ENCODE measurements at regions of chr16 and their contacts with region 1.

Region 1: GRCh38 chr16:84913315-84913714 is 93.5 kb downstream of the CRISPLD2 start:
- DNase-seq: no peak
- H3K4me3 ChIP-seq: no peak overlapping the region
- CTCF ChIP-seq: no peak

Region 2: GRCh38 chr16:84851192-84852127 is 61.9 kb before region 1 on chr16:
- CTCF ChIA-PET with region 1: no interaction called
- POLR2A ChIA-PET with region 1: no interaction called
- DNase-seq: peak; percentile 79
- H3K4me3 ChIP-seq: no peak overlapping the region
- CTCF ChIP-seq: no peak

Region 3: DNA sequence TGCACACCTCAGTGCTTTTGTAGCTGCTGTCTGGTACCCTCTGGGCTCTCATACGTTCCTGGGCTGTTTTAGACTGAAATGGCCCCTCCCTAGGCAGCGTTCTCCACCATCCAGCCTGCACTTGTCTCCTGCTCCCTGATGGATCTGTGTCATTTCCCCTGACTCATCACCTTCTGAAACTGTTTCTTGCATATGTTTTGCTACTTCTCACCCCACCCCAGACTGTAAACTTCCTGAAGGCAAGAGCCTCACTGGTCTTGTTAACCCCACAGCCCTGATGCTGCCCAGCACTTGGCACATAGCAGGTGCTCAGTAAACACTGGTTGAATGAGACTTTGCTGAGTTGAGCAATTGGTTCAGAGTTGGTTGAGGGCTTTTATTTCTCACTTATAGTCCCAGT is 14.9 kb before region 1 on chr16:
- CTCF ChIA-PET with region 1: no interaction called
- POLR2A ChIA-PET with region 1: no interaction called
- DNase-seq: no peak
- H3K4me3 ChIP-seq: no peak overlapping the region
- CTCF ChIP-seq: no peak

Region 4: DNA sequence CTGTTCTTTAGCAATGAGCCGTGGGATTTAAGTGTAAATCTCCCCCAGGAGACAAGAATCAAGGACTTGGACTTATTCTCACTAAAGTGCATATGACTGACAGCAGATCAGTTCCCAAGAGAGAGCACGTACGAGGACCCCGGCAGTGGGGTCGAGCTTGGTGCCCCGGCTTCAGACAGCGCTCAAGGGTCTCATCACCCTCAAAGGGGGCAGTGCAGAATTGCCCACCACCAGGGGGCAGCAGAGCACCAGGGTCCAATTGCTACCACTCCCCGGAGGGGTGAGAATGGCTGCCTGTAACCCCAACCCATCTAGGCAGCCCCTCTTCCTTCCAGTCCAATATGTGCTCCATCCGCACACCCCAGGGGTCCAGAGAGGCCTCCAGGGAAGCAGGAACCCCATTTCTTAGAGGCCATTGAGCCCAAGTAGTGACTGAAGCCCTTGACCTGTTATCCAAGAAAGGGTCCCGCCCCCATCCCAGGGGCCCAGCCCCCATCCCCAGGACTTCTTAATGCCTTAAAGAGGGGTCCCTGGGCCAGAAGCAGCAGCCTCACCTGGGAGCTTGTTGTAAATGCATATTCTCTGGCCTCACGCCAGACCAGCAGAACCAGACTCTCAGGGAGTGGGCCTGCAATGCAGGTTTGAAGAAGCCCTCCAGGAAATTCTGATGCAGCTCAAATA is 11.9 kb after region 1 on chr16:
- CTCF ChIA-PET with region 1: interaction called, 16 read pairs
- POLR2A ChIA-PET with region 1: no interaction called
- DNase-seq: no peak
- H3K4me3 ChIP-seq: no peak overlapping the region
- CTCF ChIP-seq: peak; percentile 72

Region 5: DNA sequence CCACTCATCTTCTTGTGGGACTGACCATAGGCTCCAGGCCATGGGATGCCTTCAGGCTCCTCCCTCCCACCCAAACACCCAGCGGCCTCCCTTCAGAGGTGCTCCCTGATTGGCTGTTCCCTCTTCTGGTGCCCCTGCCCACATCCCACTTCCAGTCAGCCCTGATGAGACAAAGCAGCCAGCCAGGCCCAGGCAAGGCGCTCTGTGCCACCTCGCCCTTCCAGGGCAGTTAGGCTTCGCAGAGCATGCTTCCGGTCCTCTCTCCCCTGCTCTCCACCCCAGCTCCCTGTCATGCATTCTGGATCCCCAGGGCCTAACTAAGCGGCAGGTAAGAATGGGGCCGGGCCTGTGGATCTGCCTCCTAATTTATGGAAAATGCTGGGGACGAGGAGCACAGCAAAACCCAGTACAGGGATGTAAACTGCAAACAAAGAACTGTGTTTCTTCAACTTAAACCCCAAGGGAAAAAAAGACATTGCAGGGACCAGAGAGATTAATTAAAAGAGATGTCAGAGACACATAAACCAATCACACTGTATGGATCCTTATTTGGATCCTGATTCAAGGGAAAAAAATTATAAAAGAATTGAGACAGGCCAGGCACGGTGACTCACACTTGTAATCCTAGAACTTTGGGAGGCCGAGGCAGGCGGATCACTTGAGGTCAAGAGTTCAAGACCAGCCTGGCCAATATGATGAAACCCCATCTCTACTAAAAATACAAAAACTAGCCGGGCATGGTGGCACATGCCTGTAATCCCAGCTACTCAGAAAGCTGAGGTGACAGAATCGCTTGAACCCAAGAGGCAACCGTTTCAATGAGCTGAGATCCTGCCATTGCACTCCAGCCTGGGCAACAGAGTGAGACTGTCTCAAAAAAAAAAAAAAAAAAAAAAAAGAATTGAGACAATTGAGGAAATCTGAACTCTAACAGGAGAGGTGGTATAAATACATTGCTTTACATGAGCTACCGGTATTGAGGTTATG is 72.1 kb after region 1 on chr16:
- CTCF ChIA-PET with region 1: no interaction called
- POLR2A ChIA-PET with region 1: no interaction called
- DNase-seq: peak; percentile 67
- H3K4me3 ChIP-seq: no peak overlapping the region
- CTCF ChIP-seq: no peak

Region 6: DNA sequence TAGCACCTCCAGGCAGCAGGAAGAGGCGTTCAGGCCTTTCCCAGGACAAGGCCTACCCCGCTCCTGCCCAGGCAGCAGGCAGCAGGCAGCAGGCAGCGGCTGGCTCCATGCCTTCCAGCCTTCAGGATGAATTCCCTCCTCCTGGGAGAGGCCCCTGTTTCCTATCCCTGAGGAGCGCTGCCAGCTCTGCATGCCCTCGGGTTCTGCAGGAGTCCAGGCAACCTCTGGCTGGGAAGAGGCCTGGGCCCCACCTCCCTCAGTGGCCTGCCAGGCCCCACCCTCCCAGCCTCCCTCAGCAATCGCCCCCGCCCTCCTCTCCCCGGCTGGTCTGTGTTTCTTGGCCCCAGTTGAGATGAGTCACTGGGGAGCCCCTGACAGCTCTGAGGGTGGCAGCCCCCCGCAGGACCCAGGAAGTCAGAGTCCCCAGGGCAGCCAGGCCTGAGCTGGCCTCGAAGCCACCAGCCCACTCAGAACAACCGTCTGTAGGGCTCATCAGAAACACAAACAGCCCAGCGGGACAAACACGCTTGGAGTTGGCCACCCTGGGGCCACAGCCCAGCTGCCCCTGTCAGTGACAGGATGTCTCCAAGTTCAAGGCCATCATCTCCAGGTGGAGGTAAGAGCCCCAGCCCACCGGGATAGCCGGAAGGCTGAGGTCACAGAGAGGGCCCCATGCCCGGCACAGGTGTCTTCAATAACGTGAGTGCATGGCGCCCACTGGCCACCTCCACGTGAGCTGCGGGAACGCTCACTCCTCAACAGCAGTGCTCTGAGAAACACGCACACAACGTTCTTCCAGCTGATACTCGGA is 238.5 kb after region 1 on chr16:
- CTCF ChIA-PET with region 1: no interaction called
- POLR2A ChIA-PET with region 1: no interaction called
- DNase-seq: no peak
- H3K4me3 ChIP-seq: no peak overlapping the region
- CTCF ChIP-seq: no peak